ENCODE measurements at regions of chr2 and their contacts with region 1.

Region 1: DNA sequence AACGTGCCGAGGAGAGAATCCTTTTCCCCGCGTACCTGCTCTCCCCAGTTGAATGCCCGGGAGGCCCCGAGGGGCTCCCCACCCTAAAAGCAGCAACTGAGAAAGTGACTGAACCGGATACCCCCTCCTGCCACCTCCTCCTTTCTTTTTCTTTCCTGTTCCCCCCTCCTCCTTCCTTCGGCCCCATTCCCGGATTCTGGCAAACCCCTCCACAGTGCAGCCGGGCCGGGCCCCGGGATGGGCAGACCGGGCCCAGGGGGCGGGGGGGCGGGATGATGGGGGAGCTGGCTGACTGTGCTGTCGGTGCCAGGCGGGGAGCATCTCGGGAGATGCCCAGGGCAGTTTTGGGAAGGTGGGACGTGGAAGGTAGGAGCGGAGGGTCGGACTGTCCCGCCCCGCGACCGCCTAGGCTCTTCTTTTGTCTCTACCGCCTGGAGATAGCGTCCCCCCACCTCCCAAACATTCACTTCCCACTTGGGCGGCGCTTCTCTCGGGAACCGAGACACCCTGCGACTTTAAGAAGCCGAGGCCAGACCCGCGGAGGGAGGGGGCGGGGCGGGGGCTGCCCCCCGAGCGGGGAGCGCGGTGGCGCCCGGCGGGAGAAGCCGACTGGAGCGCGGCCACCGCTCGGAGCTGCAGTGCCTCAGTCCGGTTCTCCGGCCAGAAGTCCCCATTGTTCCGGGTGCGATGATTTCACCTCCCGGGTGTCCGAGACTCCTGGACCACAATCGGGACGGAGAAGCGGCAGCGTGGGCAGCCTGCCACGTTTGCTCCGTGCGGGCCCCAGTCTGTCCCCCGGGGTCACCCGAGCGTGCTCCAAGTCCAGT is 8.2 kb downstream of the DLX2 start:
- DNase-seq: peak; percentile 82
- H3K4me3 ChIP-seq: peak overlapping the region; percentile 69
- H3K27ac ChIP-seq: peak overlapping the region; percentile 96
- H3K4me1 ChIP-seq: peaks cover 56% of the 10 kb centered on the region
- H3K27me3 ChIP-seq: no peaks in the 10 kb centered on the region
- CTCF ChIP-seq: no peak

Region 2: DNA sequence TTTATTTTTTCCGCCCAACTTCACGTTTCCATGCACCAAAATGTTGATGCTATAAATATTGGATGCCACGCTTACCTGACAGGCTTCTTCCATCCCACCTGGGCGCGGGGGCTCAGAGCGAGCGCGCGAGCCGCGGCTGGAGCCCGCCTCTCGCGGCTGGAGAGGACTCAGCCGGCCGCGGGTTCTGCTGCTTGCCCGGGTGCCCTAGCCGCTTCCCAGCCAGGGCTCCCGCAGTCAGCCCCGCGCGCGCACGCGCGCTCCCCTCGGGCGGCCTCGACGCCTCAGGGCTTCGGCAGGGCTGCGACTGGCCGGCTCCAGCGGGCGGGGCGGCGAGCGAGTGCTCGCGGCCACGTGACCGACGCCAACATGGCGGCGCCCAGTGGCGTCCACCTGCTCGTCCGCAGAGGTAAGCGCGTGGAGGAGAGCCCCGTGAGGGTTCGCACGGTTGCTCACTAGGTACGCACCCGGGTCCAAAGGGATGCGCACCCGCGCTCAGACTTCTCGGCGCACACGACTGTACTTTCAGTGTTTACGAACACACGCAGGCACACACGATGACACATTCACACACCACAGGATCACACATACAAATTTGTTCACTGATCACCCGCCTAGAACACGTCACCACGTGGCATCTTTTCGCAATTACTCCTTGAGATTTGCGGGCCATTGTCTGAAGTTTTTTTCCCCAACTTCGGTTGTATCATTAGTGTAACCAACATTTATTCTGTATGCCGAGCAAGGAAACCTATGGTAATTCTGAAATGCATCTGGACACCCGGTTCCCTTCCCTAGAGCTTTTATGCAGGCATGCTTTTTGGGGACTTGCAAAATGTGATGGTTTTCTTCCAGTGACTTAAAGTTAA is 94.7 kb before region 1 on chr2 and contains the start of gene METAP1D:
- CTCF ChIA-PET with region 1: no interaction called
- POLR2A ChIA-PET with region 1: no interaction called
- intact Hi-C with region 1: loop called (anchors 5 kb)
- DNase-seq: peak; percentile 97
- H3K4me3 ChIP-seq: peak within 1 kb of the TSS; percentile 63
- H3K27ac ChIP-seq: peak within 1 kb of the TSS; percentile 63
- H3K4me1 ChIP-seq: peaks cover 13% of the 10 kb centered on the region
- H3K27me3 ChIP-seq: no peaks in the 10 kb centered on the region
- CTCF ChIP-seq: no peak
- total RNA-seq, gene METAP1D: 11.8 and 12.7 TPM in 2 replicates

Region 3: GRCh38 chr2:172038604-172039003 is 55.9 kb before region 1 on chr2:
- CTCF ChIA-PET with region 1: interaction called, 5 read pairs
- POLR2A ChIA-PET with region 1: interaction called, 6 read pairs
- intact Hi-C with region 1: loop called (anchors 5 kb)
- DNase-seq: peak; percentile 85
- H3K4me3 ChIP-seq: peak overlapping the region; percentile 5
- H3K27ac ChIP-seq: peak overlapping the region; percentile 74
- H3K4me1 ChIP-seq: peaks cover 39% of the 10 kb centered on the region
- H3K27me3 ChIP-seq: no peaks in the 10 kb centered on the region
- CTCF ChIP-seq: no peak

Region 4: DNA sequence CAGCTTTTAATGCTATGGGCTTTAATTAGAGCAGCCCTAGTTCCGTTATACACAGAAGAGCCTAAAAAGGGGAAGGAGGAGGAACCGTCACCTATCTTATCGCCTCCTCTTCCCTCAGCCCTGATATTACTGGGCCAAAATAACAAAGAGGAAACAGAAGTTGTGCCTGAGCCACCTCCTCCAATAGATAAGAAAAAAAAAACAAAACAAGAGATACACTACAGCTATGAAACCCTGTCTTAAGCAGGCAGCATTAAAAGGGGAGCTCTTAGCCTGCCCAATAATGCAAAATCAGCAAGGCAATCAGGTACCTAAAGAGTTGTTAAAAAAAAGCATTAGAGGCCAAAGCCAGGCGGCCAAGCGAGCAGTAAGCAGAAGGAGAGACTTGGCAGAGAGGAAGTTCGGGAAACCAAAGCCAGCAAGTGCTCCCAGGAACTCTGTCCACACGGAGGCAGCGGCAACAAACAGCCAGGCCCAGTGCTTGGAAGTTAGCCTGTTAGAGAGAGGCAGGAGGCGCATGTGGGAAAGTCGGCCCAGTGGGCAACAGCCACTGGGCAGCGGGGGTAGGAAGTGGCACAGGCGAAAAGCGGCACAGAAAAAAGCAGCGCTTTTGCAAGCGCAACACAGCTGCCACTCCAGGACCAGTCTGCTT is 419.5 kb after region 1 on chr2:
- CTCF ChIA-PET with region 1: no interaction called
- POLR2A ChIA-PET with region 1: no interaction called
- intact Hi-C with region 1: no loop called
- DNase-seq: no peak
- H3K4me3 ChIP-seq: no peak overlapping the region
- H3K27ac ChIP-seq: no peak overlapping the region
- H3K4me1 ChIP-seq: no peaks in the 10 kb centered on the region
- H3K27me3 ChIP-seq: no peaks in the 10 kb centered on the region
- CTCF ChIP-seq: no peak

Measured in A673 (cell line).